ENCODE measurements at regions of chr15 and their contacts with region 1.

Region 1: GRCh38 chr15:60326824-60327654 is 70.7 kb downstream of the ANXA2 start:
- DNase-seq: no peak
- ATAC-seq: peak; percentile 46; the same call in 2 of the 3 replicates
- H3K4me3 ChIP-seq: no peak overlapping the region
- H3K27ac ChIP-seq: no peak overlapping the region
- H3K4me1 ChIP-seq: no peaks in the 10 kb centered on the region
- H3K27me3 ChIP-seq: peaks cover 0 to 3% of the 10 kb centered on the region in 2 experiments; a peak in 2 of 4 replicates
- CTCF ChIP-seq: peak; percentile 69 to 79 (median 78)
- EP300 ChIP-seq: no peak
- POLR2A ChIP-seq: no peak
- RAD21 ChIP-seq: peak; percentile 90

Region 2: DNA sequence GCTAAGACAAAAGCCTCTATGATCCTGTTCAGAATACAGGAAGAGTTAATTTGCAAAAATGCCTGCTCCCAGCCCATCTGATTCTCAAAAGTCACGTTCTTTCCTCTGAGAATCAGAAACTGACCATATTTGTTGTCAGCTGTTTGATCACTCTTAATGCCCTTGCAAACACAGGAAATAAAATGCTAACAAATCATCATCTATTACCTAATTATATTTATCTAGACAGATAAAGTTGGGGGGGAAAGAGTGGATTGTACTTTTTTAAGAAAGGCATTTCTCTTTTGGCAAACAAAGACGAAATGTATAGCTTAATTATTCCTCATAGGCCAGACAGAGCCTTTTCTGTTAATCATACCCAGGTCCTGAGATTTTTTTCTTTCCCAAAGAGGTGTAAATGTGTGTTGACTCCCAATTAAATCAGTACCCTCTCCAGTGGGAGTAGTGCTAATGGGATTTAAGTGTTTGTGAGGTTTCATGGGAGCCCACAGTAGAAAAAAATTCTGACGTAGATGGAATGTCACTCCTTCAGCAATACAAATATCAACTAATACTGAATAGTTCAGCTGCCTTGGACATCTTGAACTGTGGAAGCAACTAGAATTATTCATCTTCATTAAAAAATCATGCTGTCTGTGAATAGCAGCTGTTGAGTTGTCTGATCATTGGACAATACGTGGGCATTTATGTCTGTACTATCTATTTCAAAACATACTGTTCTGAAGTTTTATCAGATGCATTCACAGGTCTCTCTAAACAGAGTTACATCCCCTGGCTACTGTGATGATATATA is 615.4 kb before region 1 on chr15:
- CTCF ChIA-PET with region 1: interaction called, 3 read pairs
- POLR2A ChIA-PET with region 1: no interaction called
- RAD21 ChIA-PET with region 1: no interaction called
- SMC1A ChIA-PET with region 1: no interaction called
- in situ Hi-C with region 1: loop called (anchors 10 kb)
- intact Hi-C with region 1: no loop called
- DNase-seq: no peak
- ATAC-seq: no peak
- H3K4me3 ChIP-seq: no peak overlapping the region
- H3K27ac ChIP-seq: no peak overlapping the region
- H3K4me1 ChIP-seq: no peaks in the 10 kb centered on the region
- H3K27me3 ChIP-seq: no peaks in the 10 kb centered on the region
- CTCF ChIP-seq: no peak
- EP300 ChIP-seq: no peak
- POLR2A ChIP-seq: no peak
- RAD21 ChIP-seq: no peak

Region 3: GRCh38 chr15:59917504-59918157 is 409.4 kb before region 1 on chr15:
- CTCF ChIA-PET with region 1: interaction called, 65 read pairs
- POLR2A ChIA-PET with region 1: no interaction called
- RAD21 ChIA-PET with region 1: interaction called, 13 read pairs
- SMC1A ChIA-PET with region 1: interaction called, 11 read pairs
- in situ Hi-C with region 1: loop called (anchors 5 kb)
- intact Hi-C with region 1: loop called (anchors 2 kb)
- DNase-seq: peak; percentile 8
- ATAC-seq: peak; percentile 94
- H3K4me3 ChIP-seq: no peak overlapping the region
- H3K27ac ChIP-seq: no peak overlapping the region
- H3K4me1 ChIP-seq: peaks cover 10% of the 10 kb centered on the region
- H3K27me3 ChIP-seq: no peaks in the 10 kb centered on the region; a peak in 1 of 4 replicates
- CTCF ChIP-seq: peak; percentile 71 to 76 (median 73)
- EP300 ChIP-seq: no peak
- POLR2A ChIP-seq: no peak
- RAD21 ChIP-seq: peak; percentile 77

Region 4: DNA sequence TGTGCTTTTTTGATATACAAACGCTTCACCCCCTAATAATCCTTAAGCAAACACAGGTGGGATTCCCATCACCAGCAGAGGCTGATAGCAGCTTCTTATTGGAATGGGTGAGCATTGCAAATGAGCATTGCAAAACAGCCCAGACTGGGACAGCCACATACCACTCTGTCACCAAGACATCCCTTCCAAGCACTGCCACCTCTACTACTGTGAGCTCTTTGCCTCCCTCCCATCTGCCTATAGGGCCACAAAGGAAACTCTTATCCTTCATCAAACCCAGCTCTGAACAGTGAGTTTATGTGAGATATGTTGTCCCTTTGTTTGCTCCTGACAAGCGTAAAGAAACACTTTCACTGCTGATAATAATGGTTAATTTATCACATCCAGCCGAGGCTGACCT is 75.8 kb before region 1 on chr15:
- CTCF ChIA-PET with region 1: no interaction called
- POLR2A ChIA-PET with region 1: no interaction called
- RAD21 ChIA-PET with region 1: no interaction called
- SMC1A ChIA-PET with region 1: no interaction called
- in situ Hi-C with region 1: no loop called
- intact Hi-C with region 1: no loop called
- DNase-seq: no peak
- ATAC-seq: no peak
- H3K4me3 ChIP-seq: no peak overlapping the region
- H3K27ac ChIP-seq: no peak overlapping the region
- H3K4me1 ChIP-seq: no peaks in the 10 kb centered on the region
- H3K27me3 ChIP-seq: peaks cover 0 to 5% of the 10 kb centered on the region in 2 experiments; a peak in 1 of 4 replicates
- CTCF ChIP-seq: no peak
- EP300 ChIP-seq: no peak
- POLR2A ChIP-seq: no peak
- RAD21 ChIP-seq: no peak

Region 5: GRCh38 chr15:60315878-60316277 is 11.2 kb before region 1 on chr15:
- CTCF ChIA-PET with region 1: interaction called, 11 read pairs
- POLR2A ChIA-PET with region 1: no interaction called
- RAD21 ChIA-PET with region 1: interaction called, 3 read pairs
- SMC1A ChIA-PET with region 1: interaction called, 3 read pairs
- in situ Hi-C with region 1: no loop called
- intact Hi-C with region 1: no loop called
- DNase-seq: no peak
- ATAC-seq: no peak
- H3K4me3 ChIP-seq: no peak overlapping the region
- H3K27ac ChIP-seq: no peak overlapping the region
- H3K4me1 ChIP-seq: no peaks in the 10 kb centered on the region
- H3K27me3 ChIP-seq: no peaks in the 10 kb centered on the region
- CTCF ChIP-seq: no peak
- EP300 ChIP-seq: no peak
- POLR2A ChIP-seq: no peak
- RAD21 ChIP-seq: no peak

Region 6: DNA sequence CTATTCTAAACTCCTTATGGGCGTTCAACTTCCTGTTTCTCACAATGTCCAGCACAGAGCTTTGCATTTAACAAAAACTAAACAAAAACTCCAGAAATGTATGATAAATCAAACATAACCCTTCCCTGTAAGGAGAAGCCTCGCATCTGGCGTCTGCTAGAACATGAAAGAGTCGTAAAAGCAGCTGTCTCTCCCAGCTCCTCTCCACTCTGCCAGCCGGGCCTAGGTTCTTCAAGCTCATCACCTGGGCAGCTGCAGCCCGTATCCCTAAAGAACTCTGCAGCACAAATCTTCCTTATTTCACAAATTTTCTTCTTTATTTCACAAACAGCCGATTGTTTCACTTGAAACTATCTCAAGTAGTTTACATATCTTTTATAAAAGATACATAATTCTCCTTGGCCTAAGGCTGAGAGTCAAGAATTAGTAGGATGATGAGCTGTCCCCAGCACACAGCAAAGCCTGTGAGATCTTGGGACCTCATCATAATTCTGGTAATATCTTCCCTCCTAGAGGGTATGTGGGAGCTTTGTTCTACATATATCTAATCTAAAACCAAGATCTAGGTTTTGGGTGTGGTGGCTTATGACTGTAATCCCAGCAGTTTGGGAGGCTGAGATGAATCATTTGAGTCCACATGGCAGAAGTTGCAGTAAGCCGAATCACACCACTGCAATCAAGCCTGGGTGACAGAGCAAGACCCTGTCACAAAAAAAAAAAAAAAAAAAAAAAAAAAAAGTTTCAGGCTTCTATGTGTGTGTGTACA is 35.5 kb after region 1 on chr15:
- CTCF ChIA-PET with region 1: interaction called, 10 read pairs
- POLR2A ChIA-PET with region 1: no interaction called
- RAD21 ChIA-PET with region 1: no interaction called
- SMC1A ChIA-PET with region 1: interaction called, 3 read pairs
- in situ Hi-C with region 1: no loop called
- intact Hi-C with region 1: no loop called
- DNase-seq: no peak
- ATAC-seq: no peak
- H3K4me3 ChIP-seq: no peak overlapping the region
- H3K27ac ChIP-seq: no peak overlapping the region
- H3K4me1 ChIP-seq: no peaks in the 10 kb centered on the region
- H3K27me3 ChIP-seq: no peaks in the 10 kb centered on the region
- CTCF ChIP-seq: no peak
- EP300 ChIP-seq: no peak
- POLR2A ChIP-seq: no peak
- RAD21 ChIP-seq: no peak

Measured in GM12878 (cell line).